ENCODE measurements at regions of chr9 and their contacts with region 1.

Region 1: GRCh38 chr9:97411789-97412625 is at the start of gene TDRD7:
- DNase-seq: peak; percentile 88
- ATAC-seq: peak; percentile 87
- H3K4me3 Mint-ChIP-seq: peak within 1 kb of the TSS; percentile 82
- H3K27ac Mint-ChIP-seq: peak within 1 kb of the TSS; percentile 74
- H3K4me1 Mint-ChIP-seq: peaks cover 28% of the 10 kb centered on the region
- H3K27me3 Mint-ChIP-seq: peaks cover 25% of the 10 kb centered on the region
- total RNA-seq, gene TDRD7: 9.3 to 9.6 TPM

Region 2: DNA sequence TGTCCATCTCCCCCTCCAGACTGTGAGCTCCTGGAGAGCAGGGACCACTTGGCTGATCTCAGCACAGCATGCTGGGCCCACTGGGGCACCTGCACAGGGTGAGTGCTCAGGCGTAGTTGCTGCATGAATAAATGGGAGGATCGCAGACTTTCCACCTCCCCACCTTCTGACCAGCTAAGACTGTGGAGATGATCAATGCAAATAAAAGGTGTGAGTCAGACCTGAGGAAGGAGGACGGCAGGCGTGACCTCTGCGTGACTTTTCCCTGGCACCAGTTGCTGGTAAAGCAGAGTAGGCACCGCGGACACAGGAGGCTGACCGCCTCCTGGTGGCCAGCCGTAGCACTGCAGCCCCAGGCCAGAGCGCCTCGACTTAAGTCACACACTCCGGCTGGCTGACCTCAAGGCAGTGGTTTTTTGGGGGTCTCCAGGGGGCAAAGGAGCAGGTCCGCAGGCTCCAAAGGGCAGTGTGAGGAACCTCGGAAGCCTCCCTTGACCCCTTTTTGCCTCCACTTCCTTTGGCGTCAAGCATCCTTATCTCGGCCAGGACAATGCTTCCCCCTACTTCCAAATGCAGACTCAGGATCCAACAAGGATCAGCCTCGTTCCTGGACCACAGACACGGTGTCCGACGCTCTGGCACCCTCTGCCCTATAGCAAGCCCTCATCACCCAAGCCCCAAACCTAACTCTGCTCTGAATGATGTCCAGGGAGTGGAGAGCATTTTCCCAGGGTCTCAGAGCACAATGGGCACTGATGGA is 12.8 kb before region 1 on chr9:
- CTCF ChIA-PET with region 1: interaction called, 13 read pairs
- POLR2A ChIA-PET with region 1: interaction called, 5 read pairs
- DNase-seq: peak; percentile 65
- ATAC-seq: peak; percentile 45
- H3K4me3 Mint-ChIP-seq: no peak overlapping the region
- H3K27ac Mint-ChIP-seq: no peak overlapping the region
- H3K4me1 Mint-ChIP-seq: peaks cover 27% of the 10 kb centered on the region
- H3K27me3 Mint-ChIP-seq: peaks cover 41% of the 10 kb centered on the region